ENCODE measurements at regions of chr6 and their contacts with region 1.

Region 1: GRCh38 chr6:125197795-125198269 is 44.3 kb downstream of the TPD52L1 start:
- DNase-seq: peak; percentile 76 to 84
- ATAC-seq: peak; percentile 90
- H3K4me3 ChIP-seq: no peak overlapping the region
- H3K27ac ChIP-seq: peak overlapping the region in 1 of 2 donors; percentile 43
- H3K4me1 ChIP-seq: peaks cover 9 to 15% of the 10 kb centered on the region in 2 donors
- H3K27me3 ChIP-seq: peaks cover 0 to 2% of the 10 kb centered on the region in 2 donors

Region 2: DNA sequence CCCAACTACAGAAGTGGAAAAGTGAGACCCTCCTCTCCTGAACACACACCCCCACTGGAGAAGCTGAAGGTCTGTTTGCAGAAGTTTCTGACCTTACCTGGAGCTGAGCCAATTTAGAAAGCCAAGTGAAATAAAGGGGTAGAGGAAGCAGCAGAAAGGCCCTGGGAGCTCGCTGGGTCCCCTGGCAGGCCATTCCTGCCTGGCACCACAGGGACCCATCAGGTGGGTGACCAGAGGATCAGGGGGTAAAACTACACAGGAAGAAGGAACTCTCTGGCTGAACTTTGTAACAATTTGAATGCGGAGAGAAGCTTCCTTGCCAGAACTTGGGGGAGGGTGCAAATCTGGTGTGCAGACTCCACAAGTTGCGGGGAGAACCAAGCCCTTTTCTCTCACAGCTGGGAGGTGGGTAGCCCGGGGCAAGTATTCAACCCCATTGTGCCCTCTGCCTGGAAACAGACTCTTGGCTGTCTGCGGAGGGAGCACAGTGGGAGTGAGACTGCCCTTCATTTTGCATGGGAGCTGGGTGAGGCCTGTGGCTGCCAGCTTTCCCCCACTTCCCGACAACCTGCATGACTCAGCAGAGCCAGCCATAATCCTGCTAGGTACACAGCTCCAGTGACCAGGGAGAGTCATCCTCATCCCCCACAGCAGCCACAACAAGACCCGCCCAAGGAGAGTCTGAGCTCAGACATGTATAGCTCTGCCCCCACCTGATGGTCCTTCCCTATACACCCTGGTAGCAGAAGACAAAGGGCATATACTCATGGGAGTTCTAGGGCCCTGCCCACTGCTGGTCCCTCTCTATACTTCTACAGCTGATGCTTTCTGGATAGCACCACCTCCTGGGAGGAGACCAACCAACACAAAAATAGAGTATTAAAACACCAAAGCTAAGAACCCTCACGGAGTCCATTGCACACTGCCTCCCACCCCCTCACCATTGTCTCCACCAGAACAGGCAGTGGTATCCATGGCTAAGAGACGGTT is 73.7 kb before region 1 on chr6:
- intact Hi-C with region 1: no loop called
- DNase-seq: no peak
- ATAC-seq: no peak
- H3K4me3 ChIP-seq: no peak overlapping the region
- H3K27ac ChIP-seq: no peak overlapping the region
- H3K4me1 ChIP-seq: no peaks in the 10 kb centered on the region
- H3K27me3 ChIP-seq: no peaks in the 10 kb centered on the region

Region 3: DNA sequence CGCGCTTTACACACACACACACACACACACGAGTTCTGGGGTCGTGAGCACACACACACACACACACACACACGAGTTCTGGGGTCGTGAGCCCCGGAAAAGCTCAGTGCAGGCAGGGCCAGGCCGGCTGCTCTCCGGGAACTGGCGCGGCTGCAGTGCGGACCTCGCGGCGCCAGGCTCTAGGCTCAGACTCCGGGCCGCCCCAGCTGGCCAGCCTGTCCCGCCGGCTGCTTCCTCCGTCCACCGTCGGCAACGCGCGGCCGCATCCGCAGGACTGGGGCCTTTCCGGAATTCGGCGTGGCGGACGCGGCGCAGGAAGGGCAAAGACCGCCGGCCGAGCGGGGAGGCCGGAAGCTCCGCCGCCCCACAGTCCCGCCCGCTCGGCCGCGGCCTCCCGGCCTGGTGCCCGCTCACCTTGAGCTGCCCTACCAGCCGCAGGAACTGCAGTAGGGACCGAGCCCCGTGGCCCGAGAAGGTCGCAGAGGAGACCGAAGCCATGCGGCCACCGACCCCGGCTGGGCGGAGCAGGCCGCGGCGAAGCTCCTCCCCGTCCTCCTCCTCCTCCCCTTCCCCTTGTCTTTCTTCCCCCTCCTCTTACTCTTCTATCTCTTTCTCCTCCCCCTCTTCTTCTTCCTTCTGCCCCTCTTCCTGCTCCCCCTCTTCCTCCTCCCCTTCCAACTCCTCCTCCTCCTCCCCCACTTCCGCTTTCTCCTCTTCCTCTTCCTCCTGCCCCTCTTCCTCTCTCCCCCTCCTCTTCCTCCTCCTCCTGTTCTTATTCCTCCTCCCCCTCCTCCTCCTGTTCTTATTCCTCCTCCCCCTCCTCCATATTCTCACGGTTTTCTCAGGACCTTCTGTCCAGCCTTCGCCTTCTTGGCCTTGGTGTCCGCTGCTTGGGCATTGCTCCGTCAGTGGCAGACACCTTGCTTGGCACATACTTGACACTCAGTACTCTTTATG is 103.9 kb after region 1 on chr6 and contains the start of gene HDDC2:
- intact Hi-C with region 1: loop called in 1 of 2 experiments (anchors 5 kb)
- DNase-seq: peak; percentile 89 to 93
- ATAC-seq: peak; percentile 92
- H3K4me3 ChIP-seq: peak within 1 kb of the TSS; percentile 51 to 73
- H3K27ac ChIP-seq: peak within 1 kb of the TSS; percentile 61 to 92
- H3K4me1 ChIP-seq: no peaks in the 10 kb centered on the region
- H3K27me3 ChIP-seq: no peaks in the 10 kb centered on the region
- total RNA-seq, gene HDDC2: 48.0 to 60.9 TPM

Measured in aorta (tissue), 5 donors.